ENCODE measurements at regions of chr17 and their contacts with region 1.

Region 1: GRCh38 chr17:78013683-78014467 is 55.4 kb downstream of the TNRC6C start:
- DNase-seq: peak; percentile 56 to 73
- ATAC-seq: peak; percentile 90 to 91
- H3K4me3 ChIP-seq: no peak overlapping the region
- H3K27ac ChIP-seq: no peak overlapping the region
- H3K4me1 ChIP-seq: no peaks in the 10 kb centered on the region
- CTCF ChIP-seq: peak; percentile 98
- EP300 ChIP-seq: no peak
- POLR2A ChIP-seq: no peak
- RAD21 ChIP-seq: peak; percentile 96 to 97

Region 2: DNA sequence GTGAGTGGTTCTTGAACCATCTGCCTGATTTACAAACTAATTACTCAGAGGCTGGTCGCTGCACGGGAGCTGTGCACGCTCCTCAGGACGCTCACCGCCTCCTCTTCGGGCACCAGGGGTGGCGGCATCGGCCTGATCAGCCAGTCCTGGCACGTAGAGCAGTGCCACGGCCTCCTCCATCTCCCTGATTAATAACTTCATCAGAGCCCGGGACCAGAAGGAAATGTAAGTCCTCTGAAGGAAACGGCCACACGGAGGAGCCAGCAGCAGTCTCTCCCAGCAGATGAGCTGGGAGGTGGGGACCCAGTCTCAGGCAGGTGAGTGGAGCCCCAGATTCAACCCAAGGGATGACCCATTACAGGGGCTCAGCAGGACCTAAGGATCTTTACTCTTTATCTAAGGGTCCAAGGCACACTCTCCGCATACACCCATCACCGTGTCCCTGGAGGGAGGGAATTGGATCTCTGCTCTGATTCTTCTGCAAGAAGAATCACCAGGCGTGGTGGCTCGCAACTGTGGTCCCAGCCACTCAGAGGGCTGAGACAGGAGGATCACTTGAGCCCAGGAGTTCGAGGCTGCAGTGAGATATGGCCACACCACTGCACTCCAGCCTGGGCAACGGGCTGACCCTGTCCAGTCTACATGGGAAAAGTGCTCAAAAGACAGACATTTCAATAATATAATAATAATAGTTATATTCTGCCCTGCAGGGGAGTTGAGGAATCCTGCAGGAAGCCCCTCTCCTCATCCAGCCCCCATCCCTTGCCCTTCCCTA is 506.6 kb before region 1 on chr17:
- CTCF ChIA-PET with region 1: interaction called, 17 read pairs
- POLR2A ChIA-PET with region 1: no interaction called
- DNase-seq: no peak
- ATAC-seq: peak; percentile 42 to 43; a peak in 5 of 6 replicates
- H3K4me3 ChIP-seq: no peak overlapping the region
- H3K27ac ChIP-seq: peak overlapping the region; percentile 25 to 65; a peak in 4 of 6 replicates
- H3K4me1 ChIP-seq: peaks cover 13% of the 10 kb centered on the region
- CTCF ChIP-seq: no peak
- EP300 ChIP-seq: no peak
- POLR2A ChIP-seq: no peak
- RAD21 ChIP-seq: peak in 1 of 2 experiments; percentile 19; a peak in 2 of 5 replicates

Region 3: GRCh38 chr17:77555741-77556291 is 458.1 kb before region 1 on chr17:
- CTCF ChIA-PET with region 1: interaction called, 15 read pairs
- POLR2A ChIA-PET with region 1: no interaction called
- DNase-seq: peak in 1 of 2 experiments; percentile 34
- ATAC-seq: peak in 1 of 2 experiments; percentile 24; a peak in 3 of 6 replicates
- H3K4me3 ChIP-seq: no peak overlapping the region
- H3K27ac ChIP-seq: no peak overlapping the region
- H3K4me1 ChIP-seq: 0 out of 3 replicates have a peak, but pooled peaks cover 3% of the 10 kb centered on the region
- CTCF ChIP-seq: no peak
- EP300 ChIP-seq: no peak
- POLR2A ChIP-seq: no peak
- RAD21 ChIP-seq: no peak

Region 4: GRCh38 chr17:77899498-77899897 is 114.4 kb before region 1 on chr17:
- CTCF ChIA-PET with region 1: interaction called, 11 read pairs
- POLR2A ChIA-PET with region 1: no interaction called
- DNase-seq: no peak
- ATAC-seq: no peak
- H3K4me3 ChIP-seq: no peak overlapping the region
- H3K27ac ChIP-seq: no peak overlapping the region
- H3K4me1 ChIP-seq: no peaks in the 10 kb centered on the region
- CTCF ChIP-seq: no peak
- EP300 ChIP-seq: no peak
- POLR2A ChIP-seq: no peak
- RAD21 ChIP-seq: no peak

Region 5: DNA sequence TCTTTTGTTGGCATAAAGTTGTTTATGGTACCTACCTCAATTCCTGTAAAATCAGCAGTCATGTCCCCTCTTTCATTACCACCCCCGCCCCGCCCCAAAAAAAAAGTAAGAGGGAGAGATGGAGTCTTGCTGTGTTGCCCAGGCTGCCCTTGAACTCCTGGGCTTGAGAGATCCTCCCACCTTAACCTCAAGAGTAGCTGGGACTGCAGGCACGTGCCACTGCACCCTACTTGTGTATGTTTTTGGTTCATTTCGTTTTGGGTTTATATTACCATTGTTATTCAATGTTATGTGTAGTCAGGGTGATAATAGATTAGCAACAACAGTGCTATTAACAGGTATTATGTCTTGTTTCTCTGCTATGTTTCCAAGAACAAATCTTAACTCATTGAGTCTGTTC is 39.5 kb before region 1 on chr17:
- CTCF ChIA-PET with region 1: interaction called, 14 read pairs
- POLR2A ChIA-PET with region 1: no interaction called
- DNase-seq: no peak
- ATAC-seq: no peak
- H3K4me3 ChIP-seq: no peak overlapping the region
- H3K27ac ChIP-seq: no peak overlapping the region
- H3K4me1 ChIP-seq: no peaks in the 10 kb centered on the region
- CTCF ChIP-seq: no peak
- EP300 ChIP-seq: no peak
- POLR2A ChIP-seq: no peak
- RAD21 ChIP-seq: no peak

Region 6: DNA sequence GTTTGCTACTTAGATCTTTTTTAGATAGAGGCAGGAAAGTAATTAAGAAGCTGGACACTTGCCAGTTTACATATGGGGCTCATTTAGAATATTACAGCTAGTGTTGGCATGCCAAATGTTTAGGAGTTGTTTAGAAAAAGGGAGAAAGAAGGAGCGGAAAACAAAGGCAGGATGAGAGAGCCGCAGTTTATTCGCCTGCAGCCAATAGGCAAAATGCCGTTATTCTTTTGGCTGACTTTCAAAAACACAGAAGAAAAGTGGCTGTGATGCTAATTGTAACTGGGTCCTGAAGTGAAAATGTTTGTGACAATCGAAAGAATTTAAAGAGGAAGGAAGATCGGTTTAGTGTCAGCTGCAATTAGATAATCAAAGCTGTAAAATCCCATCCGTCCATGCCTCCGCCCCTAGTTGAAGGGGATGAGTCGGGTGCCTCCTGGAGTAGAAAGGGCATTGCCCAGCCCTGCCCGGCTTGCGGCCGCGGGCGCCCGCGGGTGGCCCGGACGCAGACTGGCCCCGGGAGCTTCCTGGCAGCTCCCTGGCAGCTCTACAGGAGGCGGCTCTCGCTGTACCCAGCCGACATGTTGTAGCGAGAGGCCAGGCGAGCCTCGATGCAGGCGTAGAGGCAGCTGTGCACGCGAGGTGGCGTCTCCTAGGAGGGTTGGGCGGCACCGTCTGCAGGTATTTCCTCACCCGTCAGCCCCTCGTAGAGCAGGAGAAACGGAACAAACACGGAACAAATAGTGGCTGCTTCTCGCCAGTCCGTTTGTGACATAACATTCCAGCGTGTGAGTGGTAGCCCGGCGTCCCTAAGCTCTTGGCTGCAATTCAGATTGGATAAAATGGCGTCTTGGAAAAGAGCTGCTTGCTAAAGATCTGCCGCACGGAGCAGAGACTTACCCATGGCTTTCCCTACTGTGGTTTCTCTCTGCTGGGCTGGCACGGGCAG is 26.8 kb after region 1 on chr17:
- CTCF ChIA-PET with region 1: interaction called, 259 read pairs
- POLR2A ChIA-PET with region 1: interaction called, 3 read pairs
- DNase-seq: peak; percentile 66 to 81
- ATAC-seq: peak; percentile 97 to 98
- H3K4me3 ChIP-seq: peak overlapping the region; percentile 47
- H3K27ac ChIP-seq: peak overlapping the region; percentile 77 to 89
- H3K4me1 ChIP-seq: peaks cover 11% of the 10 kb centered on the region; the same call in 2 of the 3 replicates
- CTCF ChIP-seq: no peak
- EP300 ChIP-seq: no peak
- POLR2A ChIP-seq: peak; percentile 88
- RAD21 ChIP-seq: no peak

Region 7: DNA sequence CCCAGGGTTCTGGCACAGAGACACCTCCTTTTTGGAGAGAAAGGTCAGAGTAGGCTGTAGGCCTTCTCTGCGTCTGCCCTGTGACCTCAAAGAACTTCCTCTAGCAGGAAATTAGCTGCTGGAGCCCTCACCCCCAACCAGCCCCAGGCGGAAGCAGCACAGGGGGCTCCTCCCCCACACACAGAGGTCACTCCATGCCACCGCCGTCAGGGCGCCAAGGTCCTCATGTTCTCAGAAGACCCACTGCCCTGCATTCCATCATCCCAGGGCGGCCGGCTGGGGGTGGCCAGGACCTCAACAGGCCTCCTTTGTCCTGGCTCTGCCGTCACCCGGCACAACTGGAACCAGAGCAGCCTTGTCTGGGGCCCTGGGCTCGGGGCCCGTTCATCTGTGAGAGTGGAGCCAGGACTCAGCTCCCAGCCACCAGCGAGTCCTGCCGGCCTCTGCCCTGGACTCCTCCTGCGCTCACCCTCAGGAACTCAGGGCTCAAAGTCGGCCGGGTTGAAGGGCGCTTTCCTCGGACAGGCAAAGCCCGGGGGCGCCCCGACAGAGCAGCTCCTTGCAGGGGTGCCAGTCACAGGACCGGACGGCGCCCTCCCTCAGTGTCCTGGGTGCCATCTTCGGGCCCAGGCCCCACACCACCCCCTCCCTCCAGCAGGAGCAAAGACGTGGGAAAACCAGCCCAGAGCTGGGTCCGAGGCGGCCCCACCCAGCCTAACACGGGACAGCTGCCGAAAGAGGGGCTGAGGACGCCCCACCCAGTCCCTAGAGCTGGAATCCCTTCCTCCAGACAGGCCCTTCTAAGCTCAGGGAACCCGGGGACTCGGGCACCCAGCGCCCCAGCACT is 113.6 kb after region 1 on chr17:
- CTCF ChIA-PET with region 1: no interaction called
- POLR2A ChIA-PET with region 1: no interaction called
- DNase-seq: no peak
- ATAC-seq: peak; percentile 2 to 51; a peak in 5 of 6 replicates
- H3K4me3 ChIP-seq: peak overlapping the region; percentile 79
- H3K27ac ChIP-seq: peak overlapping the region; percentile 77 to 93
- H3K4me1 ChIP-seq: peaks cover 14% of the 10 kb centered on the region
- CTCF ChIP-seq: no peak
- EP300 ChIP-seq: no peak
- POLR2A ChIP-seq: no peak
- RAD21 ChIP-seq: no peak